Calu3 (cell line): ENCODE measurements at regions of chr11 and their contacts with region 1.

Region 1: DNA sequence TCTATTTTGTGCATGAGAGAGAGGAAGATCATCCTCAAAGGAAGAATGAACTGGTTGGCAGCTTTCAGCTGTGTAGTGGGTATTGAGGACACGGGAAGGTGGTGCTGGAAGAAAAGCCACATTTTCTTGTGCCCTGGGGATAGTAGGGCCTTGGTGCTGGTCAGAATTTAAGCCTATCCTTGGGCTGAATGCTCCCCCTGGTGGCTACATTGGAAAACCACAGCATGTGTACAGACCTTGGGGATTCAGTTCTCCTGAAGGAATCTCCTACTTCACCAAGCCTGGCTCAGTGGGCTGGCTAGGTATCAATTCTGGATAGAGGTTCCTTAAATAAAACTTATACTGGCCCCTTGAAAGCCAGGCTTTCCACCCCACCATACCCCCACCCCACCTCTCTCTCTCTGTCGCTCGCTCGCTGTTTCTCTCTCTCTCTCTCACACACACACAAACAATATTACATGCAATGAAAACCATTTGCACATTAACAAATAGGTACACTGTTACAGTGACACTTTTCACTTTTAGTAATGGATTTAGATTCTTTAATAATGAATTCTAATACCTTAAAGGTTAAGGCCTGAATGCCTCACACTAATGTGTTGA is 2.8 kb upstream of the OR51M1 start:
- DNase-seq: peak; percentile 59
- H3K4me3 Mint-ChIP-seq: no peak overlapping the region
- H3K27ac Mint-ChIP-seq: no peak overlapping the region
- H3K4me1 Mint-ChIP-seq: no peaks in the 10 kb centered on the region
- H3K27me3 Mint-ChIP-seq: peaks cover 15% of the 10 kb centered on the region
- CTCF ChIP-seq: peak; percentile 67

Region 2: GRCh38 chr11:4626207-4627099 is 754.4 kb before region 1 on chr11:
- CTCF ChIA-PET with region 1: no interaction called
- intact Hi-C with region 1: loop called (anchors 1 kb)
- DNase-seq: peak; percentile 77
- H3K4me3 Mint-ChIP-seq: no peak overlapping the region
- H3K27ac Mint-ChIP-seq: no peak overlapping the region
- H3K4me1 Mint-ChIP-seq: peaks cover 8% of the 10 kb centered on the region
- H3K27me3 Mint-ChIP-seq: peaks cover 64% of the 10 kb centered on the region
- CTCF ChIP-seq: peak; percentile 73

Region 3: GRCh38 chr11:5123802-5124521 is 256.9 kb before region 1 on chr11:
- CTCF ChIA-PET with region 1: no interaction called
- intact Hi-C with region 1: loop called (anchors 1 kb)
- DNase-seq: peak; percentile 68
- H3K4me3 Mint-ChIP-seq: no peak overlapping the region
- H3K27ac Mint-ChIP-seq: no peak overlapping the region
- H3K4me1 Mint-ChIP-seq: no peaks in the 10 kb centered on the region
- H3K27me3 Mint-ChIP-seq: peaks cover 23% of the 10 kb centered on the region
- CTCF ChIP-seq: peak; percentile 54

Region 4: DNA sequence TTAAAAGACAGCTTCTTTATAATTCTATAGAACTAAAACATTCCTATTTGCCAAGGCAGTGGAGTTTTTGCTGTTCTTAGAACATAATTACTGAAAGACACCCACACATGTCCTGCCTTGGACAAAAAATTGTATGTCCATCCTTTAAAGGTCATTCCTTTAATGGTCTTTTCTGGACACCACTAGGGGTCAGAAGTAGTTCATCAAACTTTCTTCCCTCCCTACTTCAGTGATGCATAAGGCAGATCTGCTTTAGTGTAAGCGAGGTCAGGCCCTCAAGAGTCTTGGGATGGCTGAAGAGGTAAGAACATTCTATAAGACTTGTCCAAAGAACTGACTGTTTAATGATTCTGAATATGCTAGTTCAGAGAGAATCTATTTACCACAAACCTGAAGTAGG is 176.1 kb before region 1 on chr11:
- CTCF ChIA-PET with region 1: no interaction called
- intact Hi-C with region 1: loop called (anchors 2 kb)
- DNase-seq: peak; percentile 22
- H3K4me3 Mint-ChIP-seq: no peak overlapping the region
- H3K27ac Mint-ChIP-seq: no peak overlapping the region
- H3K4me1 Mint-ChIP-seq: no peaks in the 10 kb centered on the region
- H3K27me3 Mint-ChIP-seq: no peaks in the 10 kb centered on the region
- CTCF ChIP-seq: peak; percentile 53